Mammary epithelial cell (primary cell): ENCODE measurements at regions of chr3 and their contacts with region 1.

Region 1: DNA sequence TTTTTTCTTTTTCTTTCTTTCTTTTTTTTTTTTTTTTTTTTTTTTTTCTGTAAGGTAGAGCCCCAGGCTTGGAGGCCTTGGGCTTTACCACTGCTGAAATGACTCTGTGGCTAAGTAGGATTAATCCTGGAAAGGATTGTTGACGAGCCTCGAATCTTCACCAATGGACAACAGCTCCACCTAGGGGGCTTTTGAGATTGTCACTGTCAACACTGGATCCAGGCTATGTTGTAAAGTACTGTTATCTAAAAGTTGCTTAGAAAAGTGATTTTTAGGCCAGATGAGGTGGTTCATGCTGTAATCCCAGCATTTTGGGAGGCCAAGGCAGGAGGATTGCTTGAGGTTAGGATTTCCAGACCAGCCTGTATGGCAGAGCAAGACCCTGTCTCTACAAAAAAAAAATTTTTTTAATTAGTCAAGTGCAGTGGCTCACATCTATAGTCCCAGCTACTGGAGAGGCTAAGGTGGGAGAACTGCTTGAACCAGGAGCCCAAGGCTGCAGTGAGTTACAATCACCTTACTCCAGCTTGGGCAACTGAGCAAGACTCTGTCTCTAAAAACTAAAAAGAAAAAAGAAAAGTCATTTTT is 41.6 kb downstream of the KLHL18 start:
- DNase-seq: peak; percentile 64
- H3K4me3 ChIP-seq: no peak overlapping the region
- H3K27ac ChIP-seq: peak overlapping the region; percentile 43
- H3K4me1 ChIP-seq: peaks cover 10% of the 10 kb centered on the region
- H3K27me3 ChIP-seq: no peaks in the 10 kb centered on the region
- CTCF ChIP-seq: peak; percentile 79 to 84

Region 2: DNA sequence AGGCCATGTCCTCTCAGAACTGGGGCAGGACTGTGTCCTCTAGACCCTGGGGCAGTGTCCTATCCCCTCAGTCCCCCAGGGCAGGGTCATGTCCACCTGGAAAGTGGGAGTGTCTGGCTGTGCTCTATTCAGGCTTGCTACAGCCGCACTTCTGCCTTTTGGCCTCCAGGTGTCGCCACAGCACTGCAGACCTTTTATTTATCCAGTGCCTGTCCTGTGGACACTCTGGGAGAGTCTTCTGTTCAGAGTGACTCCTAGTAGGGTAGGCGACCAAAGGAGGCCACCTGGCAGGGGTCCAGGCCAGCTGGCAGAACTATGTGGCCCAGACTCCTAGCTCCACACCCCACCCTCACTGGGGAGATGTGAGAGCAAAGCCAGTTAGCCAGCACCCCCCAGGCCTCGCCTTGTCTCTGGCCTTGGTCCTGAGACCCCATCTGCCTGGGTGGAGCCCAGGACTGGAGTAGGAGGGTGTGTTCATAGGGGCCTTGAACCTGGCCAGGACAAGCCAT is 619.3 kb before region 1 on chr3:
- CTCF ChIA-PET with region 1: no interaction called
- dilution Hi-C with region 1: no loop called
- in situ Hi-C with region 1: no loop called
- intact Hi-C with region 1: loop called (anchors 2 kb)
- DNase-seq: peak; percentile 57
- H3K4me3 ChIP-seq: no peak overlapping the region
- H3K27ac ChIP-seq: no peak overlapping the region
- H3K4me1 ChIP-seq: no peaks in the 10 kb centered on the region
- H3K27me3 ChIP-seq: peaks cover 10% of the 10 kb centered on the region
- CTCF ChIP-seq: peak; percentile 94 to 98

Region 3: DNA sequence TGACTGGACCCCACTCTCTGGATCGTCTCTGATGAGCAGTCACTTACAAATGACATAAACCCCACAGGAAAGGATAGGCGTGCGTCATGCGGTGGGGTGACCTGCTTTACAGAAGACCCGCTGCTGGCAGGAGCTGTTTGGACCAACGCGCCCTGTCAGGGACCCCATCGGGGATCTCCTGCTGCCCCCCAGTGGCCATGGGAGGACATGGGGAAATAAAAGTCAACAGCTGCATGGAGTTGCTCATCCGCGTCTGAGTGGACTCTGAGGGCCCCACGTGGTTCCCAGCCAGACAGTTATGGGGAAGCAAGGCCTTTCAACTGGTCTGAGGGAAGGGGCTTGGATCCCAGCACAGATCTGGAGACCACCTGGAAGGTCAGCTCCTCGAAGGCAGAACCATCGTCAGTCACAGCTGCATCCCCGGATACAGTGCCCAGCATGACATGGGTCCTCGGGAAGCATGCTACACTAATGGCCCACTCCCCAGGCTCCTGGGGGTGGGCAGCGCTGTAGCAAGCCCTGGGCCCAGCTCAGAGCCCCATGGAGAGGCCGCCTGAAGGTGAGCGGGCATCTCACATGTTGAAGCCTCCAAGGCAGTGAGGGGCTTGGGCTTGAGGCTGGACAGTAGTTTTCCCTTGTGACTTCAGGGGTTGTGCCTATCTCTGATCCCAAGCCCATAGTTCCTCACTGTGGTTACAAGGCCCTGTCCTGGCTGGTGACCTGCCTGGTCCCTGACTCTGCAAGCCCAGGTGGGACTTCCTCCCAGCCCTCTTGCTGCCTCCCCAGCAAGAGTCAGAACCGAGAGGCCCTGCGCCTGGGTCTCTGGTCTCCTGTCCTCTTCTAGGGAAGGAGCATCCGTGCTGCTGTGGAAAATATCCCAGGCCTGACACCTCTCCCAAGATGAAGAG is 414.6 kb before region 1 on chr3:
- CTCF ChIA-PET with region 1: no interaction called
- dilution Hi-C with region 1: no loop called
- in situ Hi-C with region 1: no loop called
- intact Hi-C with region 1: loop called (anchors 5 kb)
- DNase-seq: peak; percentile 65
- H3K4me3 ChIP-seq: no peak overlapping the region
- H3K27ac ChIP-seq: no peak overlapping the region
- H3K4me1 ChIP-seq: peaks cover 21% of the 10 kb centered on the region
- H3K27me3 ChIP-seq: no peaks in the 10 kb centered on the region
- CTCF ChIP-seq: peak; percentile 87 to 88

Region 4: DNA sequence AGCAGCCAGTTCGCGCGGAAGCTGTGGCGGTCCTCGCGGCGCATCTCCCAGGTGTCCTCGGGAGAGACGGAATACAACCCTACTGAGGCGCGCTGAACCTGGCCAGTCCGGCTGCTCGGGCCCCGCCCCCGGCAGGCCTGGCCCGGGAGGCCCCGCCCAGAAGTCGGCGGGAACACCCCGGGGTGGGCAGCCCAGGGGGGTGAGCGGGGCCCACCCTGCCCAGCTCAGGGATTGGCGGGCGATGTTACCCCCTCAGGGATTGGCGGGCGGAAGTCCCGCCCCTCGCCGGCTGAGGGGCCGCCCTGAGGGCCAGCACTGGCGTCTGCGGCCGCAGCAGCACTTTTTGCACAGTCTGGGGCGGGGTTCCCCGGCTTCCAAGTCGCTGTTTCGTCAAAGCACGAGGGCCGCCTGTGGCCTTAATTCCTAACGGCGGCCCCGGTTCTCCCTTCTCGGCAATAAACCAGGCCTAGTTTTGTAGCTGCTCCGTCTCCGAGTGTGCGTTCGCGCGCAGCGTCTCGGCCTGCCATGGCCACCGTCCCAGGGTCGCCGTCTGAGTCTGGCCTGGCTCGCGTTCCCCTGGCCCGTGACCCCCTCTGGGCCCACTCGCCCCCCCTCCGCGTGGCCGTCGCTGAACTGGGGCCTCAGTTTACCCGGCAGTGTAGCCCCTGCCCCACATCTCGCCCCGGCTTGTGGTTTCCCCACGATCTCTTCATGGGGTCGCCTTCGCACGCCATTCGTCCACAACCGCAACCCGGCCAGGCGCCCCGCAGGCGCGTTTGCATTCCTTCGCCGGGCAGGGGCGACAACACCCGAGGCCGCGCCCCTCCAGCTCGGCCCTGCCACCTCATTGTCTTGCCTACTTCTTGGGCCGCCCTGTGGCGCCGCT is 314.9 kb before region 1 on chr3:
- CTCF ChIA-PET with region 1: no interaction called
- dilution Hi-C with region 1: no loop called
- in situ Hi-C with region 1: no loop called
- intact Hi-C with region 1: loop called (anchors 10 kb)
- DNase-seq: peak; percentile 20
- H3K4me3 ChIP-seq: peak overlapping the region in 1 of 3 experiments; percentile 20
- H3K27ac ChIP-seq: no peak overlapping the region
- H3K4me1 ChIP-seq: peaks cover 5% of the 10 kb centered on the region
- H3K27me3 ChIP-seq: no peaks in the 10 kb centered on the region
- CTCF ChIP-seq: no peak

Region 5: GRCh38 chr3:47164007-47164881 is 160.1 kb before region 1 on chr3 and contains the start of gene SETD2:
- CTCF ChIA-PET with region 1: no interaction called
- dilution Hi-C with region 1: no loop called
- in situ Hi-C with region 1: no loop called
- intact Hi-C with region 1: loop called (anchors 1 kb)
- DNase-seq: peak; percentile 91
- H3K4me3 ChIP-seq: peak within 1 kb of the TSS; percentile 92 to 99 (median 95)
- H3K27ac ChIP-seq: peak within 1 kb of the TSS; percentile 80
- H3K4me1 ChIP-seq: peaks cover 13% of the 10 kb centered on the region
- H3K27me3 ChIP-seq: no peaks in the 10 kb centered on the region
- CTCF ChIP-seq: peak in 1 of 2 donors; percentile 42
- total RNA-seq, gene SETD2: 27.7 to 36.5 TPM

Region 6: DNA sequence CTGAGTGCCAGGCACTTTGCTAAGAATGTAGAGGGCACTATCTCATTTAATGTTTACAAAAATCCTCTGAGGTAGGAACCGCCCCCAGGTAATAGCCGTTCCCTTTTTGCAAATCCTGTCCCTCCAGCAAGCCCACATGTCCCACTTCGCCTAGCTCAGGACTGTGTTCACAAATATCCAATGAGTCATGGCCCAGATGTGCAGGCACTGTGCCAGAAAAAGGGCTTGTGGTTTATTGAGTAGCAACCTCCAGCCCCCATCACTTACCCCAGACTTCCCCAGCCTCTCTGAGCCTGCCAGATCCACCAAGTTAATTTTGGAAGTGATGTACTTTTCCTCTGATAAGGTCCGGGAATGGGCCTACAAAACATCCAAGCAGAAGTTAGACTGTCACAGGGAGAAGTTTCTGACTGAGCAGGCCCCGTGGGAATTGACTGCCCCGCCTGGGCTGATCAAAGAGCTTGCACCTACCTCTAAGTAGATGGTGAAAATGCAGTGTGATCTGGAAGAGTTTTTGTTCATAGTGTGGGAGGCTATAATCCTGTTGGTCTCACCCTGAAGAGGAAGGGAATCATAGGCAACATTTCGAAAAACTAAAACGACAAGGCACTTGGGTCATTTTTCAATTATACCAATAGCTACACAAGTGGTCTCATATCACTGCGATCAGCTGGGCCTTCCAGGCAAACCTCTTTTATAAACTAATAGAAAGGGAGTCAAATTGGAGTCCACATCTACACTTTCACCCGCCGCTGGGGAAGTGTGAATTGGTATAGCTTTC is 57.5 kb before region 1 on chr3:
- CTCF ChIA-PET with region 1: no interaction called
- dilution Hi-C with region 1: no loop called
- in situ Hi-C with region 1: no loop called
- intact Hi-C with region 1: no loop called
- DNase-seq: peak; percentile 93
- H3K4me3 ChIP-seq: no peak overlapping the region
- H3K27ac ChIP-seq: no peak overlapping the region
- H3K4me1 ChIP-seq: peaks cover 12% of the 10 kb centered on the region
- H3K27me3 ChIP-seq: no peaks in the 10 kb centered on the region
- CTCF ChIP-seq: no peak

Region 7: GRCh38 chr3:47282424-47283192 is 41.8 kb before region 1 on chr3 and contains the starts of genes KIF9 and KLHL18:
- CTCF ChIA-PET with region 1: interaction called, 3 read pairs
- dilution Hi-C with region 1: no loop called
- in situ Hi-C with region 1: no loop called
- intact Hi-C with region 1: loop called (anchors 1 kb)
- DNase-seq: peak; percentile 92
- H3K4me3 ChIP-seq: peak within 1 kb of the TSS; percentile 83 to 96 (median 95)
- H3K27ac ChIP-seq: peak within 1 kb of the TSS; percentile 99
- H3K4me1 ChIP-seq: peaks cover 6% of the 10 kb centered on the region
- H3K27me3 ChIP-seq: no peaks in the 10 kb centered on the region
- CTCF ChIP-seq: no peak
- total RNA-seq, gene KIF9: 4.0 to 5.6 TPM
- total RNA-seq, gene KLHL18: 27.2 to 35.9 TPM

Region 8: GRCh38 chr3:47781685-47782445 is 457.5 kb after region 1 on chr3 and contains the start of gene SMARCC1:
- CTCF ChIA-PET with region 1: no interaction called
- dilution Hi-C with region 1: no loop called
- in situ Hi-C with region 1: no loop called
- intact Hi-C with region 1: no loop called
- DNase-seq: peak; percentile 98
- H3K4me3 ChIP-seq: peak within 1 kb of the TSS; percentile 89 to 93 (median 89)
- H3K27ac ChIP-seq: peak within 1 kb of the TSS; percentile 88
- H3K4me1 ChIP-seq: peaks cover 13% of the 10 kb centered on the region
- H3K27me3 ChIP-seq: no peaks in the 10 kb centered on the region
- CTCF ChIP-seq: no peak
- total RNA-seq, gene SMARCC1: 52.8 to 94.1 TPM